PC-9 (cell line): ENCODE measurements at regions of chr21 and their contacts with region 1.

Region 1: DNA sequence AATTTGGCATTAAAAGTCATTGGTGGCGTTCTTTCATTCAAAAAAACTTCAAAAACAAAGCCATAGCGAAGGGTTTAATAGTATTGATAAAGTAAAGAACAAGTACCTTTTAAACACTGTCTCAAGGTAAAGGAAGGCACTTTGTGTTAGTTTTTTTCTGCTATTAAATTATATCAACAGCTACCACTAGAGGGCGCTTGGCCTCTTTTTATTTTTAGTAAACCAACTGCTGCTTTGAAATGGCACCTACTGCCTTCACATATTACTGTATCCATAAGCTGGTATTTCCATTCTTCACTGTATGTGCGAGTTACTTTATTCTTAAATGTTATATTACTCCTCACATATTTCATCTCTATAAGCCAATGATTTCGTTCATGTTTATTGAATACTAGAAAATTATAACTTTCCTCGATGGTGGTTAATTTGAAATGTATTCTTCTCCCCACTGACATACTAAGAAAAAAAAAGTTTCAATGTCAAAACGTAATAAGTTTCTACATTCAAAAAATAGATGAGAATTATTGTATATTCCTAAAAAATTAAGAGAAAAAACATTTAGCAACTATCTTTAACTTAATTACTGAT is 125.7 kb upstream of the CXADR start:
- DNase-seq: peak; percentile 17 to 47
- H3K4me3 ChIP-seq: no peak overlapping the region
- H3K27ac ChIP-seq: no peak overlapping the region
- H3K4me1 ChIP-seq: peaks cover 16% of the 10 kb centered on the region
- H3K27me3 ChIP-seq: no peaks in the 10 kb centered on the region
- CTCF ChIP-seq: peak; percentile 87

Region 2: GRCh38 chr21:16695074-16695473 is 692.0 kb before region 1 on chr21:
- CTCF ChIA-PET with region 1: no interaction called
- POLR2A ChIA-PET with region 1: no interaction called
- intact Hi-C with region 1: no loop called
- DNase-seq: no peak
- H3K4me3 ChIP-seq: no peak overlapping the region
- H3K27ac ChIP-seq: no peak overlapping the region
- H3K4me1 ChIP-seq: no peaks in the 10 kb centered on the region
- H3K27me3 ChIP-seq: no peaks in the 10 kb centered on the region
- CTCF ChIP-seq: no peak

Region 3: DNA sequence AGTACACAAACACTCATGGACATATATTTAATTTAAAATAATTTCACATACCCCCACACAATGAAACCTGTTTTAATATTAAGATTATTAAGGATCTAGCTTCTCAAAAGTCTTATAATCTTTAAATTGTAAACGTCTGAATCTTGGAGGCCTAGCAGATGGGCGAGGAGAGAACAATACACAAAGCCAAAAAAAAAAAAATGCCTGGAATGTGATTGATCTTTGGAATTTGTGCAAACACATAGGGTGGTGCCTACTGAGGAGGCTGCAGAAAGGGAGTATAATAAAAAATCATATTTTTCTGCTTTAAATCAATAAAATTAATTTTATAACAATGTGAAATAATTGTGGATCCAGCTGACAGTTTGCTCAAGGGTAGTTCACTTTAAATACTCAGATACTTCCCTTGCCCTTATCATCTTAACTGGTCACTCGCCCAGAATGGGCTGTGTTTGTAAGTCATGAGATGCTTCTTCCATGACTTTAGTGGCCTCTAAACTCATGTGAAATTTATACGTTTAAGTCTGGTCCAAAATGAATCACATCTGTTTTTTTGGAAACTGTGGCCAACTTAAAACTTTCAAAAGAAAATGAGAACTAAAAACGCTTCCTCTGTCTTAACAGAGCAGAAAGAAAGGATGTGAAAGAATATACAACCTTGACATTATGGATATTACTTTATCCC is 677.1 kb before region 1 on chr21:
- CTCF ChIA-PET with region 1: no interaction called
- POLR2A ChIA-PET with region 1: no interaction called
- intact Hi-C with region 1: no loop called
- DNase-seq: no peak
- H3K4me3 ChIP-seq: no peak overlapping the region
- H3K27ac ChIP-seq: no peak overlapping the region
- H3K4me1 ChIP-seq: no peaks in the 10 kb centered on the region
- H3K27me3 ChIP-seq: no peaks in the 10 kb centered on the region
- CTCF ChIP-seq: no peak

Region 4: GRCh38 chr21:17139720-17140119 is 247.4 kb before region 1 on chr21:
- CTCF ChIA-PET with region 1: interaction called, 11 read pairs
- POLR2A ChIA-PET with region 1: no interaction called
- intact Hi-C with region 1: no loop called
- DNase-seq: no peak
- H3K4me3 ChIP-seq: peak overlapping the region; percentile 46; the same call in 1 of the 2 replicates
- H3K27ac ChIP-seq: no peak overlapping the region
- H3K4me1 ChIP-seq: no peaks in the 10 kb centered on the region
- H3K27me3 ChIP-seq: no peaks in the 10 kb centered on the region
- CTCF ChIP-seq: no peak

Region 5: GRCh38 chr21:17352937-17353655 is 34.0 kb before region 1 on chr21:
- CTCF ChIA-PET with region 1: no interaction called
- POLR2A ChIA-PET with region 1: no interaction called
- intact Hi-C with region 1: no loop called
- DNase-seq: no peak
- H3K4me3 ChIP-seq: no peak overlapping the region
- H3K27ac ChIP-seq: no peak overlapping the region
- H3K4me1 ChIP-seq: no peaks in the 10 kb centered on the region
- H3K27me3 ChIP-seq: no peaks in the 10 kb centered on the region
- CTCF ChIP-seq: no peak

Region 6: GRCh38 chr21:17368748-17369363 is 18.3 kb before region 1 on chr21:
- CTCF ChIA-PET with region 1: no interaction called
- POLR2A ChIA-PET with region 1: no interaction called
- intact Hi-C with region 1: no loop called
- DNase-seq: no peak
- H3K4me3 ChIP-seq: no peak overlapping the region
- H3K27ac ChIP-seq: no peak overlapping the region
- H3K4me1 ChIP-seq: peaks cover 27% of the 10 kb centered on the region
- H3K27me3 ChIP-seq: no peaks in the 10 kb centered on the region
- CTCF ChIP-seq: no peak

Region 7: DNA sequence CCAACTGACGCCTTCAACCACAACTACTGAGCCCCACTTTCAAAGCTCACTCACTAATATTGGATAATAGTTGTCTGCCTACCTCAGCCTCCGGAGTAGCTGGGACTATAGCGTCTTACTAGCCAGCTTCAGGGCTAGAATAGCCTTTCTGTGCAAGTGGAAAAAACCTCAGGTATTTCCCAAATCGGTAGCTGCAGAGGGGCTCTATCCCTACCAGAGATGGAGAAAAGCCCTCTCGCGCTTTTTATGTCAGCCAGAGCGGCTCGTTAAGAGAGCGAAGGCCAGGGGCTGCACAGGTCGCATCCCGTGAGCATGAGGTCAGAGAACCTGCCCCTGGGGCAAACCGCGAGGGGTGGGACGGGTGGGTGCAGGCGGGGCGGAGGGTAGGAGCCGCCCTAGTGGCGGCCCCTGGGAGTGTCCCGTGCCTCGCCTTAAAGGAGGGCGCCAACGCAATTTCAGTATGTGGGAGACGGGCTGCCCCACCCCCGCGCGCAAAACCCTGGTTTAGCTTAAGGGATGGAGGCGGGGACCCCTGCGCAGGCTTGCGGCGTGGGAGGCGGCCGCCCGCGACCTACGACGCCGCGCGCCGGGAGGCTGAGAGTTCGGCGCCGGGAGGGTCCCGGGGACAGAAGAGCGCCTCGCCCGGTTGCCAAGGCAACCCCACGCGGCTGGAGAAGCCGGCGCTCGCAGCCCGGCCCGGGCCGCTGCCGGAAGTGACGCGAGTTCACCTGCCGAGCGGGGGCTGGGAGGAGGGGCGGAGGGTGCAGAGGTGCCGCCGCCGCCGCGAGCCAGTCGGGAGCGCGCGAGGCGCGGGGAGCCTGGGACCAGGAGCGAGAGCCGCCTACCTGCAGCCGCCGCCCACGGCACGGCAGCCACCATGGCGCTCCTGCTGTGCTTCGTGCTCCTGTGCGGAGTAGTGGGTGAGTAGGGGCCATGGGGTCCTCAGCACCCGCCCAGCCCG is 125.4 kb after region 1 on chr21 and contains the start of gene CXADR:
- CTCF ChIA-PET with region 1: interaction called, 3 read pairs
- POLR2A ChIA-PET with region 1: no interaction called
- intact Hi-C with region 1: loop called (anchors 1 kb)
- DNase-seq: peak; percentile 76 to 92
- H3K4me3 ChIP-seq: peak within 1 kb of the TSS; percentile 89
- H3K27ac ChIP-seq: peak within 1 kb of the TSS; percentile 88
- H3K4me1 ChIP-seq: peaks cover 24% of the 10 kb centered on the region
- H3K27me3 ChIP-seq: no peaks in the 10 kb centered on the region
- CTCF ChIP-seq: peak; percentile 68
- total RNA-seq, gene CXADR: 12.7 and 21.7 TPM in 2 replicates

Region 8: GRCh38 chr21:17585875-17586450 is 198.8 kb after region 1 on chr21:
- CTCF ChIA-PET with region 1: interaction called, 12 read pairs
- POLR2A ChIA-PET with region 1: no interaction called
- intact Hi-C with region 1: loop called (anchors 1 kb)
- DNase-seq: peak in 1 of 2 experiments; percentile 38
- H3K4me3 ChIP-seq: no peak overlapping the region
- H3K27ac ChIP-seq: no peak overlapping the region
- H3K4me1 ChIP-seq: no peaks in the 10 kb centered on the region
- H3K27me3 ChIP-seq: no peaks in the 10 kb centered on the region
- CTCF ChIP-seq: peak; percentile 75